Calu3 (cell line): ENCODE measurements at regions of chrX and their contacts with region 1.

Region 1: DNA sequence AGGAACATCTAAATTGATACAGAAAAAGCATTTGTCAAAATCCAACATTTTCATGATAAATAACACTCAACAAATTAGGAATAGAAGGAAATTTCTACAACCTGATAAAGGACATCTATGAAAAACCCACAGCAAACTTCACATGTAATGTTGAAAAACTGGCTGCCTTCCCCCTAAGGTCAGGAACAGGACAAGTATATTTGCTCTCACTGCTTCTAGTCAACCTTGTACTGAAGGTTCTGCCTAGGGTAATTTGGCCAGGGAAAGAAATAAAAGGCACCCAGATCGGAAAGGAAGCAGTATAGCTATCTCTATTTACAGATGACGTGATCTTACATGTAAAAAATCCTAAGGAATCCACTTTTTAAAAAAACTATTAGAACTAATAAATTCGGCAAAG is 97.1 kb upstream of the USP9X start:
- DNase-seq: no peak
- H3K4me3 Mint-ChIP-seq: no peak overlapping the region
- H3K27ac Mint-ChIP-seq: no peak overlapping the region
- H3K4me1 Mint-ChIP-seq: no peaks in the 10 kb centered on the region
- H3K27me3 Mint-ChIP-seq: no peaks in the 10 kb centered on the region
- CTCF ChIP-seq: no peak

Region 2: DNA sequence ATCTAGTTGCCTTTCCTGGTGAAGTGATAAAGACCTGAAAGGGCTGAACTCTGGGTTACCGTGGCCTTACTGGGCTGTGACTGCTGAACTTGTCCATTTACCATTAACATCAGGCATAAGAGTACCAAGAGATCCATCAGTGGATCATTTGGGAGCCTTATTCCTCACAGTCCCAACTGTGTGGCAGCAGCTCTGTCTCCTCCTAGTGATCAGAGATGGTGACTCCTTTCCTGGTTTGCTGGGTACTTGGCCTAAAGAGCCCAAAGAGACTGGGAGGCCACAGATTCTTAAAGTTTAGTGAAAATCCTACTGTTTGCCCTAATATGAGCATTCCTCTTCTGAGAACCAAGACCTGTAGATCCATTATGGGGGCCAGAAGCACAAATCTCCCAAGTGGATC is 463.7 kb before region 1 on chrX:
- CTCF ChIA-PET with region 1: no interaction called
- intact Hi-C with region 1: no loop called
- DNase-seq: no peak
- H3K4me3 Mint-ChIP-seq: no peak overlapping the region
- H3K27ac Mint-ChIP-seq: no peak overlapping the region
- H3K4me1 Mint-ChIP-seq: no peaks in the 10 kb centered on the region
- H3K27me3 Mint-ChIP-seq: peaks cover 45% of the 10 kb centered on the region
- CTCF ChIP-seq: no peak

Region 3: GRCh38 chrX:40663880-40664633 is 324.0 kb before region 1 on chrX:
- CTCF ChIA-PET with region 1: interaction called, 12 read pairs
- intact Hi-C with region 1: no loop called
- DNase-seq: peak; percentile 9
- H3K4me3 Mint-ChIP-seq: no peak overlapping the region
- H3K27ac Mint-ChIP-seq: no peak overlapping the region
- H3K4me1 Mint-ChIP-seq: no peaks in the 10 kb centered on the region
- H3K27me3 Mint-ChIP-seq: no peaks in the 10 kb centered on the region
- CTCF ChIP-seq: no peak

Region 4: GRCh38 chrX:40749681-40750494 is 238.2 kb before region 1 on chrX:
- CTCF ChIA-PET with region 1: no interaction called
- intact Hi-C with region 1: no loop called
- DNase-seq: no peak
- H3K4me3 Mint-ChIP-seq: no peak overlapping the region
- H3K27ac Mint-ChIP-seq: no peak overlapping the region
- H3K4me1 Mint-ChIP-seq: no peaks in the 10 kb centered on the region
- H3K27me3 Mint-ChIP-seq: no peaks in the 10 kb centered on the region
- CTCF ChIP-seq: no peak